BJ (cell line): ENCODE measurements at regions of chr1 and their contacts with region 1.

Region 1: DNA sequence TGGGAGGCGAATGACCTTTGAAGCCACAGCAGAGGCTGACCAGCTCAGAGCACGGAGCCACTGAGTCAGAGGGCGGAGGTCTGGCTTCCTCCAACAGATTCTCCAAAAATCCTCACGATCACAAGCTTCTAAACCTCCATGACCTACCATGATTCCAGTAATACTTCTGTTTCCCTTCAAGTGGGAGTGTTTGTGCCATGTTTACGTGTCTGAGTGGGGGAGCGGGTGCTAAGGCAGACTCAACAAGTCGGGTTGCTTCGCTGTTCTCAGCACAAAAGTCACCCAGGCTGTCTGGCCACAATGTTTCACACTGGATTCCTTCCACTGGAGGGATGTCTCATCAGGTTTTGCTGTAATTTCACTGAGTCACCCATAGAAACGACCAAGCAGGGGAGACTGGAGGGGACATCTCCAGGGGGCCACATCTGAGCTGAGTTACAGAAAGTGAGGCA is 86.2 kb downstream of the SLC66A1 start:
- DNase-seq: peak; percentile 97
- H3K4me3 ChIP-seq: no peak overlapping the region
- H3K27me3 ChIP-seq: no peaks in the 10 kb centered on the region
- CTCF ChIP-seq: peak; percentile 74

Region 2: GRCh38 chr1:19374083-19374801 is 24.1 kb before region 1 on chr1:
- CTCF ChIA-PET with region 1: no interaction called
- POLR2A ChIA-PET with region 1: no interaction called
- DNase-seq: no peak
- H3K4me3 ChIP-seq: no peak overlapping the region
- H3K27me3 ChIP-seq: no peaks in the 10 kb centered on the region
- CTCF ChIP-seq: peak; percentile 57

Region 3: GRCh38 chr1:19436716-19437476 is 38.6 kb after region 1 on chr1:
- CTCF ChIA-PET with region 1: interaction called, 15 read pairs
- POLR2A ChIA-PET with region 1: no interaction called
- DNase-seq: no peak
- H3K4me3 ChIP-seq: no peak overlapping the region
- H3K27me3 ChIP-seq: no peaks in the 10 kb centered on the region
- CTCF ChIP-seq: no peak

Region 4: GRCh38 chr1:19442154-19443096 is 44.1 kb after region 1 on chr1:
- CTCF ChIA-PET with region 1: interaction called, 15 read pairs
- POLR2A ChIA-PET with region 1: no interaction called
- DNase-seq: no peak
- H3K4me3 ChIP-seq: no peak overlapping the region
- H3K27me3 ChIP-seq: no peaks in the 10 kb centered on the region
- CTCF ChIP-seq: no peak

Region 5: DNA sequence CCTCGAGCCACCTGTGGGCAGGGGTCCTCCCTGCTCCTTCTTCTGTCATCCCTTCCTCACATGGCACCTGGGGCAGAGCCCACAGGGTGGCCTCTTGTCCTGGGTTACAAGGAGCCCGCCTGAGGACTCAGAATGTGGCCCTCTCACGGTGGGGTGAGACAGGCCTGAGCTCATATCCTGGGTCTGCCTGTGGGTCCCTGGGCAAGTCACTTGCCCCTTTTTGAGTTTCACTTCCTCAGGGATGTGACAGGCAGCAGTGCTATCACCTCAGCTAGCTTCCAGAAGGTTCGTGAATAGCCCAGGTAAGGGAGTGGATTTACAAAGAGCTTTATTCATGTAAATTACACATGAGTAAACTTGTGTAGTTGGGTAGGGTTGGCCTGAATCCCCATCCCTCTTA is 299.8 kb after region 1 on chr1:
- CTCF ChIA-PET with region 1: no interaction called
- POLR2A ChIA-PET with region 1: no interaction called
- DNase-seq: no peak
- H3K4me3 ChIP-seq: no peak overlapping the region
- H3K27me3 ChIP-seq: no peaks in the 10 kb centered on the region
- CTCF ChIP-seq: no peak